PC-3 (cell line): ENCODE measurements at regions of chr11 and their contacts with region 1.

Region 1: DNA sequence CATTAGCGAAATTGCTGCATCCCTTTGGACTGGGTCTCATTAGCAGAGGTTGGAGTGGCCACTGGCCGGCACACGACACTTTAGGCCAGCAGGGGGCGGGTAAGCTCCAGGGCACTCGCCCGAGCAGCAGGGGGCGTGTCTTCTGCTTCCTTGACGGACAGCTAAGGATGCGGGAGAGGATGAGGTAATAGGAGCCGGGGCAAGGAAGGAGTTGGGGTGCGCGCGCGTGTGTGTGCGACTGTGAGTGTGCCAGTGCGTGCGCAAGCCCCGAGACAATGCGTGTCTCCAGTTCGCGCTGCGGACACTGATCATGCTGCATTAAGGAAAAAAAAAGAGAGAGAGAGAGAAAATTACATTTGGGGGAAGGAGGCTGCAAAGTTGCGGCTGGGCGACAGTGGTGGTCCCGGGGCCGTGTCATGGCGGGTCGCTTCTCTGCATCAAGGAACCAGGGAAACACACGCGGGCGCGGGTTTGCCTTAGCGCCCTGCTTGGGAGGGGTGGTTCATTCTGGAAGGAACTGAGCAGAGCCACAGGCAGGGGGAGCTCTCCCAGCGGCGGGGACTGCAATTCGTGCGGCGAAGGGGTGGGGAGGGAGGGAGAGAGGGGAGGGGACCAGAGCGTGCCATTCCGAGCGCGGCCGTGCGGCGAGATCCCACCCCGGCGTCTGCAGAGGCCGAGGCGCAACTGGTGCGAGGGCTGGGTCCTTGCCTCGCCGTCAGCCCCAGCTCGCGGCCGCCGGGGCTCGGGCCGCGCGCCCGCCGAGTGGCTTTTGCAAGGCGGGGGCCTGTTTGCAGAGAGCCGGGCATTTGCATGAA is at the start of gene DTX4:
- DNase-seq: peak; percentile 93
- ATAC-seq: peak; percentile 89
- H3K4me3 ChIP-seq: peak within 1 kb of the TSS; percentile 78
- H3K27ac ChIP-seq: no peak within 1 kb of the TSS
- H3K4me1 ChIP-seq: peaks cover 37% of the 10 kb centered on the region
- H3K27me3 ChIP-seq: peaks cover 27% of the 10 kb centered on the region
- CTCF ChIP-seq: peak; percentile 84
- total RNA-seq, gene DTX4: 4.0 and 4.9 TPM in 2 replicates

Region 2: DNA sequence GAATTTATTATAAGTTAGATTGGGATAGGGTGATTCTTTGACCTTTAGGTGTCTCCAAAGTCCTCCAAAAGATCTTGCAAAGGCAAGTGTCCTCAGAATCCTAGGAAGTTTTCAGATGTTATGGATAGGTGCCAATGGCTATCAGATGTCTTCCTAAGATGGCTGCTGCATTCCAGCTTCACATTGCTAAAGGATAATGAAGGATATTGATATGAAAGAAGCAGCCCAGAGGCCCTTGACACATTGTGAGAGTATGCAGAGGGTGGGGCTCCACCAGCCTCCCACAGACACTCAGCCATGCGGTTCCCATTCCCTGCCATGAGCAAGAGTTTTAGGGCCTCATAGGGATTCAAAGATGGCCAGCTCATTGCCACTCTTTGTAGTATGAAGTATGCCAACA is 304.9 kb before region 1 on chr11:
- CTCF ChIA-PET with region 1: no interaction called
- POLR2A ChIA-PET with region 1: no interaction called
- intact Hi-C with region 1: no loop called
- DNase-seq: no peak
- ATAC-seq: no peak
- H3K4me3 ChIP-seq: no peak overlapping the region
- H3K27ac ChIP-seq: no peak overlapping the region
- H3K4me1 ChIP-seq: no peaks in the 10 kb centered on the region
- H3K27me3 ChIP-seq: no peaks in the 10 kb centered on the region
- CTCF ChIP-seq: no peak

Region 3: DNA sequence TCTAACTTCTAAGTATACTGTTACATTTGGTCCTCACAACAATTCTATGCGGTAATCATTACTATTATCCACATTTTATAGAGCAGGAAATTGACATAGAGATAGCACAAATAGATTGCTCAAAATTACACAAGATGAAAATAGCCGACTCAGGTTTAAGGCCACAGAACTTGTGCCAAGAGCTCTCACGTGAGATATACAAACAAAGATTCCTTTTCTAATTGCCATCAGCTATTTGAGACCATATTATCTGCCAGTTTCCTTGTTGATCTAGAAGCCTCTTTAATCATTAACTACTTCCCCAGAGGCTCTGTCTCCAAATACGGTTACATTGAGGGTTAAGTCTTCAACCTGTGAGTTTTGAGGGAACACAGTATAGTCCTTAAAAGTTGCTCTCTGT is 146.6 kb before region 1 on chr11:
- CTCF ChIA-PET with region 1: no interaction called
- POLR2A ChIA-PET with region 1: no interaction called
- intact Hi-C with region 1: no loop called
- DNase-seq: no peak
- ATAC-seq: no peak
- H3K4me3 ChIP-seq: no peak overlapping the region
- H3K27ac ChIP-seq: no peak overlapping the region
- H3K4me1 ChIP-seq: no peaks in the 10 kb centered on the region
- H3K27me3 ChIP-seq: peaks cover 75% of the 10 kb centered on the region
- CTCF ChIP-seq: no peak

Region 4: DNA sequence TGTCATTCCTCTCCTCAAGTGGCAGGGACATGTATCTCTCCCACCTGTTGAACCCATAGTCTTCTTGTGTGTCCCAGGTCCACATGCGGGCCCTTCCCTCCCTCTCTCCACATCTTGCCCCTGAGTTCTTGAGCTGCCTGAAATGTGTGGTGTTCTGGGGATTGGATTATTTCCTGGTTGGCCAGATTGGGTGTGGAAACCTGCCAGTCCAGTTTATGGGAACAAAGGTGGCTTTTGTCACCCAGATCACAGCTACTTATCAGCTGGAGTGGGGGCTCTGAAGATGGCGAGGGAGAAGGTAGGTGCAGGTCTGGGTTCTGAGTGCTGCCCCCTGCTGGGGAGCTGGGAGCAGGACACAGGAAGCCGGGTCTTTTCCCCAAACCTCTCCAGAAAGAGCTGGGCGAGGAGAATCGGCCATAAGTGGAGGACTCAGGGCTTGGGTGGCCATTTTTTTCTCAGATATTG is 14.4 kb after region 1 on chr11:
- CTCF ChIA-PET with region 1: interaction called, 23 read pairs
- POLR2A ChIA-PET with region 1: no interaction called
- intact Hi-C with region 1: no loop called
- DNase-seq: peak; percentile 76
- ATAC-seq: peak; percentile 47
- H3K4me3 ChIP-seq: no peak overlapping the region
- H3K27ac ChIP-seq: peak overlapping the region; percentile 39
- H3K4me1 ChIP-seq: peaks cover 43% of the 10 kb centered on the region
- H3K27me3 ChIP-seq: no peaks in the 10 kb centered on the region
- CTCF ChIP-seq: peak; percentile 92

Region 5: DNA sequence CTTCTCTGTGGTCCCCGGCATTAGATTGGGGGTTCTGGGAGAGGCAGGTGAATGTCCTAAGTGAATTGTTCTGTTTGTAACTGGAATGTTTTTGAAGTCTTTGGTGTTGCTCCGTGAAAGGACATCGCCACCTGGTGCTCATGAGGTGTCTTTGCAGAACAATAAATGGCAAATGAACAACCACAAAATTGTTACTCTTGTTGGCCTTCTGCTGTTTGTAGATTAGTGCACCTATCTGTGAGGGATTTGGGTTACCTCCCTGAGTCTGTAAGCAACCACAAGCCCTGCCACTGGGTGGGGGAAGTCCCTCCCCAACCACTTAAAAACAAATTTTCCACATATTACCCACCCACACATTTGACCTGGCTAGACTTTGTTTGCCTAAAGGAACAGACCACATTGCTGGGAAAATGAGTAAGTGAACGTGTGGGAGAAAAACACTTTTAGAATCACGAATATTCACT is 36.3 kb after region 1 on chr11:
- CTCF ChIA-PET with region 1: interaction called, 15 read pairs
- POLR2A ChIA-PET with region 1: no interaction called
- intact Hi-C with region 1: loop called (anchors 1 kb)
- DNase-seq: peak; percentile 69
- ATAC-seq: peak; percentile 56
- H3K4me3 ChIP-seq: no peak overlapping the region
- H3K27ac ChIP-seq: no peak overlapping the region
- H3K4me1 ChIP-seq: 0 out of 2 replicates have a peak, but pooled peaks cover 4% of the 10 kb centered on the region
- H3K27me3 ChIP-seq: peaks cover 6% of the 10 kb centered on the region; the same call in 1 of the 2 replicates
- CTCF ChIP-seq: peak; percentile 88

Region 6: DNA sequence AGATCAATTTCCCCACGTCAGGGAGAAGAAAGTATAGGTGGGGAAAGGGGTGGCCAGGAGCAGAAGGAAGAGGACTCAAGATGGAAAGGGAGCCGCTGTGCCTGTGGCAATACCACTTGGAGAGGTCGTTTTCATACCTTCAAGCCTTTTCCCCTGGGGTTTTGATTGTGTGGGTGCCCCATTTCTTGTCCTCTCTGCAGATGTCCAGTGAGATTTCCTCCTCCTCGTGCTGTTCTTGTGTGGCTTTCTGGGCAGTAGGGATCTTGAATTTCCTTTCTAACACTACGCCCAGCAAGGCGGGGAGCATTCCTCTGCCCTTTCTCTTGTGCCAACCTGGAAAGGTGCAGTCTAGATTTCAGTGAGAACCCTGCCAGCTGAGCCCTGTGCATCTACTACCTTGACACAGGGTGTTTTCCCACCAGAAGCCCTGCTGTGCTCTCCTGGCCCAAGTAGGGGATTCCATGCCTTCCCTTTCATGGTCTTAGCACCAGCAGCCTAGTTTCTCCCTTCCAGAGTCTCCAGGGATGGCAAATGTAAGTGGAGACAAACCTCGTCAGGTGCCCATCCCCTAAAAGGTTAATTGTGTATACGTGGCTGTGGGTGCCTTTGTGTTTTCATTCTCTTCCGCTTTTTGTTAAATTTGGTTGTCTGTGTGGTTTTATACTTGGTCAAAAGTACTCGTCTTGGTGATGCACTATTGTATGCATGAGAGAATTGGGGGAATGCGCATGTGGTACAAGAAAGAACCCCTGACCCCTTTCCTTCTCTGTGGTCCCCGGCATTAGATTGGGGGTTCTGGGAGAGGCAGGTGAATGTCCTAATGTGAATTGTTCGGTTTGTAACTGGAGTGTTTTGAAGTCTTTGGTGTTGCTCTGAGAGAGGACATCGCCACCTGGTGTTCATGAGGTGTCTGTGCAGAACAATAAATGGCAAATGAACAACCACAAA is 112.4 kb after region 1 on chr11:
- CTCF ChIA-PET with region 1: no interaction called
- POLR2A ChIA-PET with region 1: no interaction called
- intact Hi-C with region 1: loop called (anchors 1 kb)
- DNase-seq: peak; percentile 71
- ATAC-seq: peak; percentile 45; the same call in 1 of the 2 replicates
- H3K4me3 ChIP-seq: no peak overlapping the region
- H3K27ac ChIP-seq: no peak overlapping the region
- H3K4me1 ChIP-seq: no peaks in the 10 kb centered on the region
- H3K27me3 ChIP-seq: peaks cover 42% of the 10 kb centered on the region
- CTCF ChIP-seq: peak; percentile 91

Region 7: GRCh38 chr11:59429924-59430516 is 258.3 kb after region 1 on chr11:
- CTCF ChIA-PET with region 1: interaction called, 4 read pairs
- POLR2A ChIA-PET with region 1: no interaction called
- intact Hi-C with region 1: loop called (anchors 1 kb)
- DNase-seq: peak; percentile 86
- ATAC-seq: peak; percentile 54; the same call in 1 of the 2 replicates
- H3K4me3 ChIP-seq: no peak overlapping the region
- H3K27ac ChIP-seq: no peak overlapping the region
- H3K4me1 ChIP-seq: no peaks in the 10 kb centered on the region
- H3K27me3 ChIP-seq: peaks cover 22% of the 10 kb centered on the region
- CTCF ChIP-seq: peak; percentile 96